ENCODE measurements at regions of chr20 and their contacts with region 1.

Region 1: DNA sequence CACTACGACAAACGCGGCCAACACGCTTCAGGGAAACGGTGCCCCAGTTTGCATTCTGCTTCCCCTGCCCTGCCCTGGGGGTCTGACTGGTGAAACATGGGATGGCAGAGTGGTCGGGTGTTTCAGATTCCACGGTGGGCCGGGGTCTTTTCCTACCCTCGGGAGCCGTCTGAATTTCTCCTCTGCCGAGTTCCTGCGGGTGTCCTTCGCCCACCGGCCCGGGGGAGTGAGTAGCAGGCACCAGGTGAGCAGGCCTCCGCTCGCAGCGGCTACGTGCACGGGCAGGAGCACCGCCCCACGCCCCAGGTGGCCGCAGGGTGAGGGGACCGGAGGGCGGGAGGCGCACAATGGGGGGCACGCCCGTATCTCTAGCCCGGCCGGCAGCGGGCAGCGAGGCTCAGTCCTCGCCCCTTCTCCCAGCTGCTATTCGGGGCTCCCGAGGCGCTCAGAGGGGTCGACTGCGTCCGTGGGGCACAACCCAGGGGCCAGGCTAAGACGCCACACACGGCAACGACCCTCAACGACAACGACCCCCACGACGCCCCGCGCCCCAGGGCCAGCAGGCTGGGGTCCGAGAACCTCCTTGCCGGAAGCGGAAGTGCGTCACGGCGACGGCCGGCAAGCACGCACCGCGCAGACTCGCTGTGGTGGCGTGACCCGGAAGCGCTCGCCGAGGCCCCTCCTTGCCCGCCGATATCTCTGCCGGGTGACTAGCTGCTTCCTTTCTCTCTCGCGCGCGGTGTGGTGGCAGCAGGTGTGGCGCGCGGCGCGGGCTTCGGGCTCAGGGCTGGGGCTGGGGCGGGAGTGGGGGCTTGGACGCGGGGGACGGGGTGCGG is at the start of gene RPS21:
- DNase-seq: peak; percentile 43
- H3K4me3 ChIP-seq: peak within 1 kb of the TSS; percentile 100
- H3K27me3 ChIP-seq: no peaks in the 10 kb centered on the region
- CTCF ChIP-seq: no peak
- polyA plus RNA-seq, gene RPS21: 3,553 and 3,818 TPM in 2 replicates

Region 2: GRCh38 chr20:61951695-61952533 is 434.7 kb before region 1 on chr20:
- CTCF ChIA-PET with region 1: no interaction called
- POLR2A ChIA-PET with region 1: no interaction called
- DNase-seq: no peak
- H3K4me3 ChIP-seq: no peak overlapping the region
- H3K27me3 ChIP-seq: peaks cover 2% of the 10 kb centered on the region; the same call in 1 of the 2 replicates
- CTCF ChIP-seq: no peak

Region 3: DNA sequence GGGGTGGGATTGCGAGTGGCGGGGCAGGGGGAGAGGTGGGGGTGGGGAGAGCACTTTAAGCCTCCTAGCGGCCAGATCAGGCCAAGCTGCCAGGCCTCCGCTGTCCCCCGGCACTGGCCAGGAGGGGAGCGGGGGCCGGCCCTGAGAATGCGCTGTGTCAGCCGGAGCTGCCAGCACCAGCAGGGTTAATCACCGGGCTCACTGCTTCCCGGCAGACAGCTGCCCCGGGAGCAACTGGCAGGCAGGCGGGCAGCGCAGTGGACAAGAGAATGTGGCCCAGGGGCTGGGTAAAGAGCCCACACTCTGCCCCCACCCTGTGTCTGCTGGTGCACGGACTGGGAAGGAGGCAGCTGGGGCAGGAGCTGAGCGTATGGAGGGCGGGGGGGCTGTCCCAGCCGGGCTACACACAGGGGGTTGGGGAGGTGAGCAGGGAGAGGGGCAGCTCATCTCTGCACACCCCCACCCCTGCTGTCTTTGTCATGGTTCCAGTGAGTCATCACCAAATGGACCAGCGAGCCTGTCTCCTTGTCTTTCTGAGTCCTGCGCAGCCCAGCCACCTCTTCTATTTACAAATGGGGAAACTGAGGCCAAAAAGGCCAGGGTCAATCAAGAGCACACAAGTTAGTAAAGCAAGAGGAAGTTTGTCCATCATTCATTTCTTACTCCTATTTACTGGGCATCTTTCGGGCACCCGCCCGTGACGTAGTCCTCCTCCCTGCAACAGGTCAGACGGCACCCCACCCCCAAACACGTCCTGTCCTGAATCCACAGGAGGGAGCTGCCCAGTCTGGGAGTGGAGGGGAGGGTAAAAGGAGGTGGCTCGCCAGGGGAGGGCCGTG is 17.4 kb before region 1 on chr20:
- CTCF ChIA-PET with region 1: interaction called, 17 read pairs
- POLR2A ChIA-PET with region 1: interaction called, 3 read pairs
- DNase-seq: no peak
- H3K4me3 ChIP-seq: no peak overlapping the region
- H3K27me3 ChIP-seq: peaks cover 3% of the 10 kb centered on the region; the same call in 1 of the 2 replicates
- CTCF ChIP-seq: peak; percentile 56

Region 4: GRCh38 chr20:62376112-62377063 is 10.2 kb before region 1 on chr20:
- CTCF ChIA-PET with region 1: interaction called, 11 read pairs
- POLR2A ChIA-PET with region 1: no interaction called
- DNase-seq: no peak
- H3K4me3 ChIP-seq: no peak overlapping the region
- H3K27me3 ChIP-seq: no peaks in the 10 kb centered on the region
- CTCF ChIP-seq: peak; percentile 47

Region 5: GRCh38 chr20:62536871-62537401 is 150.3 kb after region 1 on chr20:
- CTCF ChIA-PET with region 1: no interaction called
- POLR2A ChIA-PET with region 1: no interaction called
- DNase-seq: no peak
- H3K4me3 ChIP-seq: no peak overlapping the region
- H3K27me3 ChIP-seq: peaks cover 12% of the 10 kb centered on the region
- CTCF ChIP-seq: no peak

Measured in BJ (cell line).